GM12878 (cell line): ENCODE measurements at regions of chr19 and their contacts with region 1.

Region 1: DNA sequence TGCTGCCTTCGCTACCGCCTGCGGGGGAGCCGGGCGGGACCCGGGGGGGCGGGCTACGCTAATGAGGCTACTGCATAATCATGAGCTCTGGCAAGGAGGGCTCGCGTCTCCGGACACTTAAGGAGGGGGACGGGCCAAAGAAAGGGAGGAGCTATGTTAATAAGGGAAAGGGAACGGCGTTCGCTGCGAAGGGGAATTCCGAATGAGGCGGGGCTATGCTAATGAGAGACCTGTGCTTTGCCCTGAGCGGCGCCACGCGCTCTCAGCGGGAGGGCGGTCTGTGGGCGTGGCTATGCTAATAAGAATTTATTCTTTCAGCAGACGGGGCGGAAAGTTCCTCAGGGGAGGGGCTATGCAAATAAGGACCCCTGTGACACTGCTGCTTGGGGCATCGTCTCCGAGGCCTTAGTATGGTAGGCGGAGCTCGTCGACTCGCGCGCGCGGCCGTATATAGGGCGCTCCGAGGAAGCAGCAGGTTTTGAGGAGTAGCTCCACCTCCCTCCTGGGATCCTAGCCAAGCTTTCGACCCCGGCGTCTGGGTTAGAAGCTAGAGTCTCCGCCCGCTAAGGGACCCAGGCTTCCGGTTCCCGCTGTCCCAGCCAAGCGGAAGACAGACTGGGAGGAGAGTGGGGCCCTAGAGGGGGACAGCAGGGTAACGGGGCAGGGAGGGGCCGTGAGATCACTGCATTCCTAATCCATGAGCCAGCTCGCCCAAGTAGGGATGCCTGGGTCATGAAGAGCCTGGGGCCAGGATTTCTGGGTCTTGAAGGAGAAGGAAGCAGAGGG is at the start of gene RRAS:
- DNase-seq: peak; percentile 100
- ATAC-seq: peak; percentile 79
- H3K4me3 ChIP-seq: peak within 1 kb of the TSS; percentile 80
- H3K27ac ChIP-seq: peak within 1 kb of the TSS; percentile 98
- H3K4me1 ChIP-seq: peaks cover 18% of the 10 kb centered on the region
- H3K27me3 ChIP-seq: no peaks in the 10 kb centered on the region
- CTCF ChIP-seq: no peak
- EP300 ChIP-seq: no peak
- POLR2A ChIP-seq: peak; percentile 94
- RAD21 ChIP-seq: no peak
- polyA plus RNA-seq, gene RRAS: 0.24 to 0.29 TPM

Region 2: DNA sequence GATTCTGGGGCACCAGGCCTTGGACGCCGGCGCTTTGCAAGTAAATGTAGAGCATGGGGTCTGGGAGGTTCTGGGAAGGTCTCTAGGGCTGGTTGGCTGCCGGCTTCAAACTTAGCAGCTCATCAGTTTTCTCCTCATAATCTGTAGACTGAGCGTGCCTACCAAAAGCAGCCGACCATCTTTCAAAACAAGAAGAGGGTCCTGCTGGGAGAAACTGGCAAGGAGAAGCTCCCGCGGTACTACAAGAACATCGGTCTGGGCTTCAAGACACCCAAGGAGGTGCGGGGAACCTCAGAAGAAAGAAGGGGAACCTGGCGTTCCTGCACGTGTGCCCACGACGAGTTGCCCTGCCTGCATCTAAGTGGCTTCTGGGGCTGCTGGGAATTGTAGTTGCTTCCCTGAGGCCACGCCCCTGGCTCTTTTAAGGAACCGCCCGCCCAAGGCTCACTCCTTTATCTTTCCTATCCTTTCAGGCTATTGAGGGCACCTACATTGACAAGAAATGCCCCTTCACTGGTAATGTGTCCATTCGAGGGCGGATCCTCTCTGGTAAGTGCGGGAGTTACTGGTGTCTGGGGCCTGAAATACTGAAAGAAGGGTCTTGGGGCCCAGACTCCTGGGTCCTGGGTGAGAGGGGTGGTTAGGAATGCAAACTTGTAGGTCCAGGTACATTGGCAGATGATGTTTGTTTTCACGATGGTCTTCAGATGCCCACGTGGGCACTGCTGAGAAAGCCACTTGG is 143.1 kb before region 1 on chr19:
- CTCF ChIA-PET with region 1: no interaction called
- POLR2A ChIA-PET with region 1: interaction called, 6 read pairs
- RAD21 ChIA-PET with region 1: interaction called, 3 read pairs
- SMC1A ChIA-PET with region 1: no interaction called
- in situ Hi-C with region 1: no loop called
- intact Hi-C with region 1: loop called (anchors 2 kb)
- DNase-seq: no peak
- ATAC-seq: peak; percentile 41
- H3K4me3 ChIP-seq: peak overlapping the region; percentile 79
- H3K27ac ChIP-seq: peak overlapping the region; percentile 85
- H3K4me1 ChIP-seq: peaks cover 35% of the 10 kb centered on the region
- H3K27me3 ChIP-seq: no peaks in the 10 kb centered on the region
- CTCF ChIP-seq: no peak
- EP300 ChIP-seq: no peak
- POLR2A ChIP-seq: peak; percentile 74
- RAD21 ChIP-seq: no peak

Region 3: DNA sequence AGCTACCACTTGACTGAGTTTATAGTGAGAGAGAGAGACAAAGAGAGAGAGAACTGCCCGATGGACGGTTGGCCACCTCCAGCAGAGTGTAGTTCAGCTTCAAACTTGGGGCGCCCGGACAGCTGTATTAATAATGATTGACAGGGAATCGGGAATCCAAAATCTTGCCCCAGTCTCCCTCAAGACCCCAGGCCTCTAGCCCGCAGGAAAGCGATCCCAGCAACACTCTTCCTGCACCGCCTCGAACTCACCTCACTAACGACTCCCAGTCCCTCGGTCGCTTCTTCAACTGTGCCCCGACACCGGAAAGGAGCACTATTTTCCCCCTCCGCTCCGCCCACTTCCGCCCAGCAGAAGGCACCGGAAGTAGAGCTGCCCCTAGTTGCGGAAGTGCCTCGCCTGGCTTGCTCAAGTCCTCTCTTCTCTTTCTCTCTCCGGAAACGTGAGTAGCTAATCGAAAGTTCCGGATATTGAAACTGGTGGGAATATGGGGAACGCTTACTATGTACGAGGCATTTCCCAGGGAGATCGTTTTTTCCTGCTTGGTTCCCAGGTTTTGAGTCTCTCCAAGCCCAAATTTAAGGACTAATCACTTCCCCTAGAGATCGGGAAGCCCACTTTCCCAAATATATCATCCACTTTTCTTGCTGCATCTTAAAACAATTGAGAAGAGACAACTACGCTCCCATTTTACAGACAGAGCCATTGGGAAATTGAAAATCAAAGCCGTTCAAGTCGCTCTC is 59.9 kb before region 1 on chr19 and contains the start of gene NOSIP:
- CTCF ChIA-PET with region 1: interaction called, 4 read pairs
- POLR2A ChIA-PET with region 1: interaction called, 23 read pairs
- RAD21 ChIA-PET with region 1: interaction called, 6 read pairs
- SMC1A ChIA-PET with region 1: interaction called, 14 read pairs
- in situ Hi-C with region 1: no loop called
- intact Hi-C with region 1: no loop called
- DNase-seq: peak; percentile 89
- ATAC-seq: peak; percentile 98
- H3K4me3 ChIP-seq: peak within 1 kb of the TSS; percentile 77
- H3K27ac ChIP-seq: peak within 1 kb of the TSS; percentile 65
- H3K4me1 ChIP-seq: peaks cover 7% of the 10 kb centered on the region; the same call in 1 of the 2 replicates
- H3K27me3 ChIP-seq: no peaks in the 10 kb centered on the region
- CTCF ChIP-seq: no peak
- EP300 ChIP-seq: no peak
- POLR2A ChIP-seq: peak; percentile 100
- RAD21 ChIP-seq: no peak
- polyA plus RNA-seq, gene NOSIP: 7.2 to 20.1 TPM

Region 4: GRCh38 chr19:49590071-49590970 is 50.0 kb before region 1 on chr19:
- CTCF ChIA-PET with region 1: interaction called, 6 read pairs
- POLR2A ChIA-PET with region 1: interaction called, 49 read pairs
- RAD21 ChIA-PET with region 1: interaction called, 17 read pairs
- SMC1A ChIA-PET with region 1: interaction called, 7 read pairs
- in situ Hi-C with region 1: no loop called
- intact Hi-C with region 1: loop called (anchors 5 kb)
- DNase-seq: peak; percentile 91
- ATAC-seq: peak; percentile 88
- H3K4me3 ChIP-seq: peak overlapping the region; percentile 85
- H3K27ac ChIP-seq: peak overlapping the region; percentile 90
- H3K4me1 ChIP-seq: peaks cover 15% of the 10 kb centered on the region
- H3K27me3 ChIP-seq: no peaks in the 10 kb centered on the region
- CTCF ChIP-seq: 0 out of 6 replicates have a peak, but pooled peaks of 1 of the 3 experiments have one; percentile 2
- EP300 ChIP-seq: no peak
- POLR2A ChIP-seq: peak; percentile 89
- RAD21 ChIP-seq: no peak

Region 5: DNA sequence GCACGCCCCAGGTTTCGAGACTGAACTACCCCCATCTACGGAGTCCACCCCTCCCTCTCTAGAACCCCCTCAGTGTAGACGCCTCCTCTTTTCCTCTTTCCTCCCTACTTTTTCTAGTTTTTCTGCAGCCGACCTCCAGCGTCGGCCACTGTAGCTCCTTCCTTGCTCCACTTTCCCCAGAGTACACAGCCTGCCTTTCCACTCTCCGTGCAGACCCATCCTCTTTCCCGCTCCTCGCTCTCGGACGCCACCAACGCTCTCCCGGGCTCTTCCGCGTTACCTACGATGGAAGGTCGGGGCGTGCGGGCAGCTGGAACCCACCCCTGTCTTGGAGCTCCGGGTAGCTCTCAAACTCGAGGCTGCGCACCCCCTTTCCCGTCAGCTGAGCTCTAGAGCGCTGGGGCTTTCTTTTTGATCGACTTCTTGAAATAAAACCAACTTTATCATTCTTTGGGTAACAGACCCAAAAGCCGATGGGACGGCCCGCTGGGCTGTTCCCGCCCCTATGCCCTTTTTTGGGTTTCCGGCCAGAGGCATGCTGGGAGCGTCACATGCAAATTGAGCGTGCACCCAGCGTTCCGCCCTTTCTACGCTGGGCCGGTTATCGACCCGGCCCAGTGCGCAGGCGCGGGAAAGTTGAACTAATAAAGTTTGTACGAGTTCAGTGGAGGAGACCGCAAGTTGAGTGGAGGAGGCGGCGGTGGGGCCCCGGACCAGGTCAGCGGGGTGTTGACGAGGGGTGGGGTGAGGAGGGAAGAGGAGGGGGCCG is 25.2 kb after region 1 on chr19 and contains the starts of genes BCL2L12 and IRF3:
- CTCF ChIA-PET with region 1: interaction called, 130 read pairs
- POLR2A ChIA-PET with region 1: interaction called, 200 read pairs
- RAD21 ChIA-PET with region 1: interaction called, 14 read pairs
- SMC1A ChIA-PET with region 1: interaction called, 9 read pairs
- in situ Hi-C with region 1: no loop called
- intact Hi-C with region 1: loop called (anchors 2 kb)
- DNase-seq: peak; percentile 84
- ATAC-seq: peak; percentile 92
- H3K4me3 ChIP-seq: peak within 1 kb of the TSS; percentile 99
- H3K27ac ChIP-seq: peak within 1 kb of the TSS; percentile 91
- H3K4me1 ChIP-seq: peaks cover 14% of the 10 kb centered on the region
- H3K27me3 ChIP-seq: no peaks in the 10 kb centered on the region
- CTCF ChIP-seq: no peak; a peak in 1 of 6 replicates
- EP300 ChIP-seq: no peak
- POLR2A ChIP-seq: peak; percentile 74
- RAD21 ChIP-seq: no peak
- polyA plus RNA-seq, gene BCL2L12: 1.8 to 7.9 TPM
- polyA plus RNA-seq, gene IRF3: 5.5 to 17.2 TPM

Region 6: DNA sequence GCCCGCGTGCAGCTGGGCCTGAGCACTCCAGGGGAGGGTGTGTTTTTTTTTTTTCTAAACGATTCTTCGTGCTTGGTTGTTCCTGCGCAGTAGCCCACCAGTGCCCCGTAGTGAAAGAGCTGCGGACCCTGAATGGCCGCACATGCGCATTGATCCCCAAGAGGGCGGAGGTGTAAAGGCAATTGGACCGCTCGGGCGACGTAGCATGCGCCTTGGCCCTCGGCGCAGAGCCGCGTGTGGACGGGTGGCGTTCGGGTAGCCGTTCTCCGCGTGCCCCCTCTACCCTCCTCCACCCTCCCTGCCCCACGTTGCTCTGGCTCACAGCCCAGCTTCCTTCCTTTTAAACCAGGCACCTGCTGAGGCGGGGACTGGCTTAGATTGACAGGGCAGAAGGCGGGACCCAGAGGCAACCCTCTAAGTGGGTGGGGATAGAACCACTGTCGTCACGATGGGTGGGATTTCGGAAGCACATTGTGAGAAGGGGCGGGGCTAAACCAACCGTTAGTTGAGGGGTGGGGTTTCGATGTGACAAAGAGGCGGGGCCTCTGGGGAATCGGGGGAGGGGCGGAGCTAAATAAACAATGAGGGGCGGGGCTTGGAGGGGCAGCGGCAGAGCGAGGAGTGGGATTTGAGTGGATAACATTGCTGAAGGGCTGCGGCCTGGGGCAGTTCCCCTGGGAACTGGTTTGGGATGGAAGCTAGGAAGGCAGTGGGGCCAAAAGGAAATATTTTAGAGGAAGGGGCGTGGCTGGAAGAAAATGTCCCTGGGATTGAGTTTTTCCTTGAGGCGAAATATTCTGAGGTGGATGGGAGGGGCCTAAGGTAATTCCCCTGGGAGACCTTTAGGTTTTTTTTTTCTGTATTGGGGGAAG is 289.5 kb after region 1 on chr19:
- CTCF ChIA-PET with region 1: no interaction called
- POLR2A ChIA-PET with region 1: interaction called, 10 read pairs
- RAD21 ChIA-PET with region 1: no interaction called
- SMC1A ChIA-PET with region 1: no interaction called
- in situ Hi-C with region 1: no loop called
- intact Hi-C with region 1: no loop called
- DNase-seq: peak; percentile 90
- ATAC-seq: peak; percentile 83
- H3K4me3 ChIP-seq: peak overlapping the region; percentile 92
- H3K27ac ChIP-seq: peak overlapping the region; percentile 94
- H3K4me1 ChIP-seq: peaks cover 15% of the 10 kb centered on the region
- H3K27me3 ChIP-seq: no peaks in the 10 kb centered on the region
- CTCF ChIP-seq: no peak
- EP300 ChIP-seq: no peak
- POLR2A ChIP-seq: peak; percentile 94
- RAD21 ChIP-seq: no peak